A673 (cell line): ENCODE measurements at regions of chr9 and their contacts with region 1.

Region 1: GRCh38 chr9:19230356-19231125 is at the start of gene DENND4C:
- DNase-seq: peak; percentile 82
- H3K4me3 ChIP-seq: peak within 1 kb of the TSS; percentile 71
- H3K27ac ChIP-seq: peak within 1 kb of the TSS; percentile 86
- H3K4me1 ChIP-seq: peaks cover 6% of the 10 kb centered on the region
- H3K27me3 ChIP-seq: no peaks in the 10 kb centered on the region
- CTCF ChIP-seq: no peak
- total RNA-seq, gene DENND4C: 12.8 and 13.9 TPM in 2 replicates

Region 2: GRCh38 chr9:19048966-19049916 is 181.3 kb before region 1 on chr9 and contains the start of gene RRAGA:
- CTCF ChIA-PET with region 1: no interaction called
- POLR2A ChIA-PET with region 1: no interaction called
- intact Hi-C with region 1: loop called (anchors 5 kb)
- DNase-seq: peak; percentile 92
- H3K4me3 ChIP-seq: peak within 1 kb of the TSS; percentile 71
- H3K27ac ChIP-seq: peak within 1 kb of the TSS; percentile 89
- H3K4me1 ChIP-seq: no peaks in the 10 kb centered on the region
- H3K27me3 ChIP-seq: no peaks in the 10 kb centered on the region
- CTCF ChIP-seq: peak; percentile 66
- total RNA-seq, gene RRAGA: 33.0 and 34.9 TPM in 2 replicates

Region 3: DNA sequence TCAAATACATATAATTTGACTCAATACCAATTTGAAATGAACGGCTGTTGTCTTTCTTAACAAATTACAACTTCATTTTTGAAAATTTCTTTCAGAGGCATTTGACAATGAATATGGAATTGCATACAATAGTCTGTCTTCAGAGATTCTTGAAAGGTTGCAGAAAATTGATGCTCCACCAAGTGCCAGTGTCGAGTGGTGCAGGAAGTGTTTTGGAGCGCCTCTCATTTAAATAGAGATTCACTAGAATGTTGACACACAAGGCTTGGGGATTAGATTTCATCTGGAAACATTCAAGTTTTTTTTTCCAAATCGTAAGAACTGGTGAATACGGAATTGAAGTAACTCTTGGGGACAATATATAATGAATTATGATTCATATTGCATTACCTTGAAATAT is 141.4 kb after region 1 on chr9:
- CTCF ChIA-PET with region 1: interaction called, 13 read pairs
- POLR2A ChIA-PET with region 1: no interaction called
- intact Hi-C with region 1: no loop called
- DNase-seq: peak; percentile 37
- H3K4me3 ChIP-seq: no peak overlapping the region
- H3K27ac ChIP-seq: no peak overlapping the region
- H3K4me1 ChIP-seq: no peaks in the 10 kb centered on the region
- H3K27me3 ChIP-seq: no peaks in the 10 kb centered on the region
- CTCF ChIP-seq: no peak